Ascending aorta (tissue), 2 donors: ENCODE measurements at regions of chr13 and their contacts with region 1.

Region 1: DNA sequence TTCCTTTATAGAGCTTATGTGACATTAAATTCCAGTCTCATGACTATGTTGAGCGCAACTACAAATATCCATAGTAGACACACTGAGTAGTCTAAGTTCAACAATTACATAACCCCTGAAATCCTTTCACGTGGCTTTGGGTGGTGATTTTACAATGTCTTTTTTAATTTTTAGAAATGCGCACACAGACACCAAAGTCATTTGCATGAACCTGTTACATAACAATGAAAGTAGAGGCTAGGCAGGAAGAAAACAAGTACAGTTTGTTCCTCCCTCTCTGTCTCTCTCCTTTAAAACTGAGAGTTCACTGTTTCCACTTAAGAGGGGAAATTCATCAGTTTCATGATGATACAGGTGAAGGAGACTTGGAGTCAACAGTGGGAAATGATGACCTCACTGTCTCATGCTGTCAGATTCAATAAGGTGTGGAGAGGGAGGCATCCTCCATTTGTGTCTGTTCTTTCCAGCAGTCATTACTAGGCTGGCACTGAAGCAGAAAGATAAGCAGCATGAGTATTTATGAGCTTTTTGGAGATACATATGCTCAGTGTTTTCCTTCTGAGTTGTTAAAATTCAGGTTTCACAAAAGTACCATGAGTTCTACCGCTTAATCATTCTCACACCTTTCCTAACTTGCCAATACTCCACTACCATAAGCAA is 201.8 kb downstream of the LHFPL6 start:
- DNase-seq: no peak
- H3K4me3 ChIP-seq: no peak overlapping the region
- H3K27ac ChIP-seq: no peak overlapping the region
- H3K4me1 ChIP-seq: peaks cover 0 to 13% of the 10 kb centered on the region in 2 donors
- H3K27me3 ChIP-seq: no peaks in the 10 kb centered on the region
- CTCF ChIP-seq: no peak

Region 2: DNA sequence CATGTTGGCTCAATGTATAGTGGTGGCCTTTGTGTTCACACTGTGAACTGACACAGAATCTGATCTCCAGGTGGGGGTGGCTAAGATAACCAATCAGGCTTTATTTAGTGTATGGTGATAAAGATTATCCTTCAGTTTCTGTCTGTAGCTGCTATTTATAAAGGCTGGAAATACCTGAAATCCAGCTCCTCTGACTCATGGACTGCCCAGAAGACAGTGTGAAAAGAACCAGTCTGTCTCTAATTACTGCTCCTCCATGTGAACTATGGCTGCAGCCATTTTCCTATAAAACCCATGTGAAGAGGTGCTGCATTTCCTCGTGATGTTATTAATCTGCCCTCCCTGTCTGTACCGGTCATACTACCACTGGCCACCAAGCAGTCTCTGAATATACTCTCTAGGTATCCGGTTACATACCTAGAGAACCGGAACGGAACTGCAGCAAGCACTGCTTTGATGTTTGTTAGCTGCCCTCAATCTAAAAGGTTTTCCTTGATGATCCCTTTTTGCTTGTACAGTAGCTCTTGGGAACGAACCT is 36.2 kb before region 1 on chr13:
- intact Hi-C with region 1: loop called (anchors 5 kb)
- DNase-seq: no peak
- H3K4me3 ChIP-seq: peak overlapping the region in 1 of 2 donors; percentile 39
- H3K27ac ChIP-seq: peak overlapping the region; percentile 68 to 71
- H3K4me1 ChIP-seq: peaks cover 0 to 24% of the 10 kb centered on the region in 2 donors
- H3K27me3 ChIP-seq: no peaks in the 10 kb centered on the region
- CTCF ChIP-seq: peak in 1 of 3 experiments; percentile 4